GM10248 (cell line): ENCODE measurements at regions of chr10 and their contacts with region 1.

Region 1: GRCh38 chr10:115171392-115171960 is 78.3 kb downstream of the ATRNL1 start:
- DNase-seq: no peak
- CTCF ChIP-seq: peak; percentile 36

Region 2: DNA sequence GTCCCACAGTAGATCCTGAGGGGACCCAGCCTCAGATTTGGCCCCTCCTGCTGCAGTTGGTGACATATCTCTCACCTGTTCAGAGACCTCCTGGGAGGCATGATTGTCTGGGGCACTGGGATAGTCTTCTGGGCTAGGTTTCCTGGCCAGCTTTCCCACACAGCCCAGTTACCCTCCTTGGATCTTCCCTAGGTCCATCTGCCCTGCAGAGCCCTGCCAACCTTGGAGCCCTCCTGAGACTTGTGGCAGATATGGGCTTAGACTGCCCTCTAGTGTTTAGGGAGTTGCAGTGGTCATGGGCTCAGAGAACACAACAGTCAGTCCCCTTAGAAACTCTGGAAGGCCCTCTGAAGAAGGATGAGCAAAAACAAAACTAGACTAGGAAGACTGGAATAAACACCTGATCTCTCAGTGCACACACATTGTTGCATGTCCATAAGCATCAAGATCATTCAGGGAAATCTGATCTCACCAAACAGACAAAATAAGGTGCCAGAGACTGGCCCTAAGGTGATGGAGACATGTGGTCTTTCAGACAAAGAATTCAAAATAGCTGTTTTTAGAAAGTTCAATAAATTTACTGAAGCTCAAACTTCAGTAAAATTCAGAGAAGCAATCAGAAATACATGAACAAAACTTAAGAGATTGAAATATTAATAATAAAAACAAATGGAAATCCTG is 246.2 kb after region 1 on chr10:
- CTCF ChIA-PET with region 1: interaction called, 11 read pairs
- POLR2A ChIA-PET with region 1: no interaction called
- DNase-seq: peak; percentile 40
- CTCF ChIP-seq: peak; percentile 70

Region 3: GRCh38 chr10:115909959-115910731 is 738.7 kb after region 1 on chr10:
- CTCF ChIA-PET with region 1: no interaction called
- POLR2A ChIA-PET with region 1: no interaction called
- DNase-seq: no peak
- CTCF ChIP-seq: no peak

Region 4: DNA sequence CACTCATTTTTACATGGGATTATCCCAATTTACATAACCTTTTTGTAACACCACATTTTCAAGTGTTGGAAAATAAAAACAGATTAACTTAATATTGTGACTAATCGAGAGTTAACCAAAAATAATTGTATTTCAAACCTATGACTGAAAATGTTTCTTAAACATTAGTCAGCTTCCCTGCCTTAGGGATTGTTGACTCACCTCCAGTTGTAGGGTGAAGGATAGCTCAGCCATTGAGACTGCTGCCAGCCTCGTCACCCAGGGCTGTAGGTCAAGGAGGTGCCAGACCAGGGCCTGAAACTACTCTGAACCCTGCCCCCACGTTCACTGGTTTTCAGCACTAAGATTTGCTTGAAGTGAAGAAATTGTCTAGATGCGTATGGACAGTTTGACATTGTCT is 750.3 kb after region 1 on chr10:
- CTCF ChIA-PET with region 1: no interaction called
- POLR2A ChIA-PET with region 1: no interaction called
- DNase-seq: no peak
- CTCF ChIP-seq: no peak